ENCODE measurements at regions of chr18 and their contacts with region 1.

Region 1: DNA sequence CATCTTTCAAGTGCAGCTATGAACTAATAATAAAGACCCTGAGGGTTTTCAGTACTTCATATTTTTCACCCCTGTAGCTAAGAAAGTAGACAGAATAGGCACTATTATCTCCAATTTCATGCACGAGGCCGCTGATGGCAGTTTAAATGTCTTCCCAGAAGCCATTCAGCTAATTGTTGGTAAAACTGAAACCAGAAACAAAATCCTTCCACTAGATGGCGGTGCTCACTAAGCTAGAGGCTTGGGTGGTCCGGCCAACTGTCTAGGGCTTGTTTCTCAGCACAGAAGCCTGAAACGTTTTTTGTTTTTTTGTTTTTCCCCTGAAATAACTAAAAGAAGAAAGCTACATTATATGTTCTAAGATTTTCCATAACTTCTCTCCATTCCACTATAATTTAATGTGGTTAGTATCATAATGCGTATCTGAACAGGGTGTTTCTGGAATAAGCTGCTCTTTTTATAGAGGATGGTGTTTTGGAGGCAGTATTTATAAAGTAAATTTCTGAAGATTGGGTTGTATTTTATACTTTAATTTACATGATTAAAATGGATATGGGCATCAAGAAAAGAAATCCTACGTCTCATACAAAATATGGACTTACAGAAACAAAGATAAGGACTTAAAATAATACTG is 159.4 kb downstream of the PIK3C3 start:
- DNase-seq: peak; percentile 53
- H3K4me3 ChIP-seq: no peak overlapping the region
- H3K27ac ChIP-seq: no peak overlapping the region
- H3K4me1 ChIP-seq: peaks cover 5% of the 10 kb centered on the region
- H3K27me3 ChIP-seq: no peaks in the 10 kb centered on the region
- CTCF ChIP-seq: peak; percentile 80 to 91

Region 2: GRCh38 chr18:42053188-42053781 is 61.1 kb before region 1 on chr18:
- CTCF ChIA-PET with region 1: no interaction called
- dilution Hi-C with region 1: no loop called
- in situ Hi-C with region 1: no loop called
- intact Hi-C with region 1: loop called (anchors 2 kb)
- DNase-seq: peak; percentile 28
- H3K4me3 ChIP-seq: no peak overlapping the region
- H3K27ac ChIP-seq: no peak overlapping the region
- H3K4me1 ChIP-seq: peaks cover 15% of the 10 kb centered on the region
- H3K27me3 ChIP-seq: no peaks in the 10 kb centered on the region
- CTCF ChIP-seq: peak; percentile 79 to 92

Region 3: DNA sequence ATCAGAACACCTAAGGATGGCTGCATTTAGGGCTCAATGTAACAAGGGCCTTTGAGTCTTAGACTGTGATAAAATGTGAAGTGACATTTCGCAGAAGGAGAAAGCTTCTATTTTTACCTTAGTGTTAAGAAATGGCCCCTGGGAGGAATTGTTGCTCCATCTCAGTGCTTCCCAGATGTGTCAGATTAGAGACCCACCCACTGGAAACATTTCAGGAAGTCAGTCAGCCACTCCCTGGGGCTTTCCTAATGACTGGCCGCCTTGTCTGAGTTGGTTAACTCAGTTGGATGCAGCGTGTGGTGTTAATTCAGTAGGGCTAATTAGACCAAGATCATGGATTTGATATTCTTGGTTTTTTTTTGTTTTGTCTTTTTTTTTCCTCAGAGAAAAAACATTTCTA is 196.5 kb after region 1 on chr18:
- CTCF ChIA-PET with region 1: no interaction called
- dilution Hi-C with region 1: no loop called
- in situ Hi-C with region 1: no loop called
- intact Hi-C with region 1: no loop called
- DNase-seq: peak; percentile 70
- H3K4me3 ChIP-seq: no peak overlapping the region
- H3K27ac ChIP-seq: peak overlapping the region; percentile 28
- H3K4me1 ChIP-seq: peaks cover 5% of the 10 kb centered on the region
- H3K27me3 ChIP-seq: no peaks in the 10 kb centered on the region
- CTCF ChIP-seq: no peak

Region 4: DNA sequence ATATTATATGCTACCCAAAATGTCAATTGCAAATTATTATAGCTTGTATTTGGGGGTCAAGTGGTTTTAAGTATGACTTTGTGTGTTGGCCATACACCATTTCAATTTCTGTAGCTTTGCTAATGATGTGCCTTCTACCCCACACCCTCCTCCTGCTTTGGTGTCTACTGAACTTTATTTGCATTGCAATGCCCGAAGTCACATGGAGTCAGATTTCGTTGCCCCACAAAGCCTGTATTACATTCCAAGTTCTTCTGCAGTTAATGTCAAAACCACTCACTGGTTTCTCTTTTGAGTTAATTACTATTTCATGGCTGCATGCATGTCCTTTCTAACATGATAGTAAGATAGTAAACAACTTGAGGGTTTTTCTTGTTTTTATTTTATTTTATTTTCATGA is 472.2 kb after region 1 on chr18:
- CTCF ChIA-PET with region 1: no interaction called
- dilution Hi-C with region 1: no loop called
- in situ Hi-C with region 1: no loop called
- intact Hi-C with region 1: loop called (anchors 10 kb)
- DNase-seq: no peak
- H3K4me3 ChIP-seq: no peak overlapping the region
- H3K27ac ChIP-seq: no peak overlapping the region
- H3K4me1 ChIP-seq: no peaks in the 10 kb centered on the region
- H3K27me3 ChIP-seq: peaks cover 2% of the 10 kb centered on the region
- CTCF ChIP-seq: no peak

Region 5: DNA sequence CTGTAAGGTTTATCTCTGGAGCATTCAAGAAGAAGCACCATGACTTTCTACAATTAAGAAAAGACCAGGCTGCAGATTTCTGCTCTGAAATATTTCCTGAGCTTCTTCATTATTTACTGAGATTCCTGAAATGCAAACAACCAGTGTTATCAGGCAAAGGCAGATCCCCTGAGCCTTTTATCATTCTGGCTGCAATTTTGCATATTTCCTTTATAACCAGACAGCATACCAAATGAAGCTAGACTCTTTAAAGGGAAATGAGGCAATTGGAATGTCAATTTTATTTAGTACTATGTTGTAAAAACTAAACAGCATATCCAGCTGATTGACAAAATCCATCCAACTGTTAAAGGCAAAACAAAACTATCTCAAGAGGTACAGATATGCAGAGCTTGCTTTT is 628.5 kb after region 1 on chr18:
- CTCF ChIA-PET with region 1: no interaction called
- dilution Hi-C with region 1: no loop called
- in situ Hi-C with region 1: no loop called
- intact Hi-C with region 1: no loop called
- DNase-seq: no peak
- H3K4me3 ChIP-seq: no peak overlapping the region
- H3K27ac ChIP-seq: no peak overlapping the region
- H3K4me1 ChIP-seq: no peaks in the 10 kb centered on the region
- H3K27me3 ChIP-seq: no peaks in the 10 kb centered on the region
- CTCF ChIP-seq: no peak

Region 6: GRCh38 chr18:43271593-43272432 is 1157.4 kb after region 1 on chr18:
- CTCF ChIA-PET with region 1: no interaction called
- dilution Hi-C with region 1: no loop called
- in situ Hi-C with region 1: loop called in 1 of 2 experiments (anchors 25 kb)
- intact Hi-C with region 1: loop called (anchors 1 kb)
- DNase-seq: peak; percentile 26
- H3K4me3 ChIP-seq: no peak overlapping the region
- H3K27ac ChIP-seq: no peak overlapping the region
- H3K4me1 ChIP-seq: no peaks in the 10 kb centered on the region
- H3K27me3 ChIP-seq: no peaks in the 10 kb centered on the region
- CTCF ChIP-seq: peak; percentile 74 to 78

Region 7: DNA sequence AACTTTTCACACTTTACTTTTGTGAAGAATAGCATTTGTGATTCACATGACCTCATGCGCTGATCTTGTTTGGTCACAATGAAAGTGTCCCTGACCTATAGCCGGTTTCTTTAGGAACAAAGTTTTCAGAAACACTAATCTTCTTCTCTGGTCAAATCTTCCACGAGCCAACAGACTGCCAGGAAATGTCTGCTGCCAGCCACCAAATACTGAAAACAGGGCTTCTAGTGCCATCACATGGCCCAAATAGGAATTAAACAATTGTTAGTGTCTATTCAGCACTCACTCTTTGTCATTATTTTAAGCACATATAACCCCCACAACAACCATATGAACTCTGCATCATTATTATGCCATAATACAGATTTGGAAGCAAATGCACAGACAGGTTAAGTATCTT is 1449.4 kb after region 1 on chr18:
- CTCF ChIA-PET with region 1: no interaction called
- dilution Hi-C with region 1: no loop called
- in situ Hi-C with region 1: no loop called
- intact Hi-C with region 1: loop called (anchors 2 kb)
- DNase-seq: peak; percentile 30
- H3K4me3 ChIP-seq: no peak overlapping the region
- H3K27ac ChIP-seq: no peak overlapping the region
- H3K4me1 ChIP-seq: no peaks in the 10 kb centered on the region
- H3K27me3 ChIP-seq: no peaks in the 10 kb centered on the region
- CTCF ChIP-seq: peak; percentile 59 to 64